GM10248 (cell line): ENCODE measurements at regions of chr12 and their contacts with region 1.

Region 1: DNA sequence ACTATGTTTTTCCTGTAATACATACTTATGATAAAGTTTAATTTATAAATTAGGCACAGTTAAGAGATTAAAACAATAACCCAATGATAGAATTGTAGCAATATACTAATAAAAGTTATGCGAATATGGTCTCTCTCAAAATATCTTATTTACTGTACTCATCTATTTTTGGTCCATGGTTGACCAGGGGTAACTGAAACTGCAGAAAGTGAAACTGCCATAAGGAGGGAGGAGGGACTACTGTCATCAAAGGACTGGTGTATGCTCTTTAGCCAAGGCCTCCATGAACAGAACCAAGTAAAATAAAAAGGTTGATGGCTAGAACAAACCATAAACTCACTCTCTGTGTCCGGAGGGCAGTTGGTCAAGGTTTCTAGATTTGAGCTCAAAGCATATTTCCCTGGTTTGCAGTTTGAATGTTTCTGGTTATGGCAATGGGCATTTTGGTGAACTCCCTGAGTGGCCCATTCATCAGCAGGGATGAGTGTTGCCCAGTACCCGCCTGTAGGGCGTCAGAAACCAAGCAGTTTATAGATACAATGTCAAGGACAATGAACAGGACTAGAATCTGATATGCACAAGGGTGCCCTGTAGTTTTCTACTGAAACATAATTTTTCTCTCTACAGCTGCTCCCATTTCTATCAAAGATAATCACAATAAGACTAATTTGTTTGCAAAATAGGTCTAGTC is 19.8 kb downstream of the LEMD3 start:
- DNase-seq: peak; percentile 25
- CTCF ChIP-seq: no peak

Region 2: DNA sequence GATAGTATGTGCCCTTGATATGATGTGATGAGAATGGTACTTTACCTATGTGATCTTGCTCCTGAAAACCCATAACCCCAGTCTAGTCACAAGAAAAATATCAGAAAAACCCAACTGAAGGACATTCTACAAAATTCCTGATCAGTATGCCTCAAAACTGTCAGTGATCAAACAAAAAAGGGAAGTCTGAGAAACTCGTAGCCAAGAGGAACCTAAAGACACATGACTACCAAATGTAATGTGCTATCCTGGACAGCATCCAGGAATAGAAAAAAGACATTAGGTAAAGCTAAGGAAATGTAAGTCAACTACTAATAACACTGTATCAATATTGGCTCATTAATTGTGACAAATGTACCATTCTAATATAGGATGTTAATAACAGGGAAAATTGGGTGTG is 63.9 kb before region 1 on chr12:
- CTCF ChIA-PET with region 1: no interaction called
- POLR2A ChIA-PET with region 1: no interaction called
- DNase-seq: no peak
- CTCF ChIP-seq: no peak

Region 3: DNA sequence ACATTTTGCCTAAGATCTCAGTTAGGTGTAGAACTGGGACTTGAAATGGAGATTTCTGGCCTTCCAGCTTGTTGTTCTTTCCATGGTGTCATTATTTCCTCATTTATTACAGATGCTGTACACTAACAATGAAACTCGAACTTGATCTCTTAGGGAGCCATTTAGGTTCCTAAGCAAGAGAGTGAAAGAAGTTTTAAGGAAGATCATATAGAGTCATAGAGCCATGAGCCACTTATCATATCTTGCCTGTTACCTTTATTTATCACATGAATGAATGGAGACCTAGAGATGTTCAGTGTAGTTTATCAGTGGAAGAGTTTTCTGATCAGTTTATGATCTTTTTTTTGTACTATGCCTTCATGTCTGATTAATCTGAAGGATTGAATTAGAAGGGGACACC is 1123.0 kb after region 1 on chr12:
- CTCF ChIA-PET with region 1: no interaction called
- POLR2A ChIA-PET with region 1: interaction called, 12 read pairs
- DNase-seq: no peak
- CTCF ChIP-seq: no peak